ENCODE measurements at regions of chr2 and their contacts with region 1.

Region 1: DNA sequence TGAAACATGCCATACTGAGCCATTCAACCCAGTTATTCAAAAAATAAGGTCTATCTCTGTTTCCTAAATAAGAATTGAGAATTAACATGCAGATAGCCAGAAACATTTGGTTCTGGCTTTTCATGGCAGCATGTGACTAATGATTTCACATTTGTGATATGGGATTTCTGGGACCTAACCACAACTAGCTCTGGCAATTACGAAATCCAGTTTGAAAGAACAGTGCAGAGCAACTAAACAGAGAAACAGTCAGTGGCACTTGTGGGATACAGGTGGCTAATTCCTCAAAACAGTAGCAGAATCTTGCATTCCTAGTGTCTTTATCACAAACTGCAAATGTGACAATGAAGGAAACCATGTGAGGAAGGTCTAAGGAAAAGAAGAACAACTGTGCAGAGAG is 637.8 kb upstream of the CHAC2 start:
- DNase-seq: peak; percentile 76
- ATAC-seq: peak; percentile 43
- H3K4me3 ChIP-seq: peak overlapping the region; percentile 7; the same call in 1 of the 2 replicates
- H3K27ac ChIP-seq: peak overlapping the region; percentile 87
- H3K4me1 ChIP-seq: peaks cover 32% of the 10 kb centered on the region
- H3K27me3 ChIP-seq: no peaks in the 10 kb centered on the region
- CTCF ChIP-seq: no peak

Region 2: DNA sequence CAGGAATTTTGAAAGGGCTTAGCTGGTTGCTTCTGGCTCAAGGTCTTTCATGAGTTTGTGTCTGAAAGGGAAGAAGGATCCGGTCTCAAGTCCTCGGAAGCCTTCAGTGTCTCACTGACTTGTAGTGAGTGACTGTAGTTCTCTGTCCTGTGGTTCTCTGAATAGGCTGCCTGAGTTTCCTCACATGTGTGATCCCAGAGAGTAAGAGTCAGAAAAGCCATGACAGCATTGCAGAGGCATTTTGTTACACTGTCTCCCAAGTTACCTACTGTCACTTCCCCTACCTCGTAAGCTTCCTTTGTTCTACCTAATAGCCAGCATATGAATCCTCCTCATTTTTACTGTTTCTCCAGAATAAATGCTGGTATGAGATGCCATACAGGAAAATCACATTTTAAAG is 71.3 kb before region 1 on chr2:
- CTCF ChIA-PET with region 1: no interaction called
- POLR2A ChIA-PET with region 1: no interaction called
- intact Hi-C with region 1: loop called (anchors 2 kb)
- DNase-seq: peak; percentile 54
- ATAC-seq: peak; percentile 68
- H3K4me3 ChIP-seq: no peak overlapping the region
- H3K27ac ChIP-seq: no peak overlapping the region
- H3K4me1 ChIP-seq: 0 out of 2 replicates have a peak, but pooled peaks cover 1% of the 10 kb centered on the region
- H3K27me3 ChIP-seq: no peaks in the 10 kb centered on the region
- CTCF ChIP-seq: no peak

Region 3: GRCh38 chr2:53104263-53104662 is 25.6 kb before region 1 on chr2:
- CTCF ChIA-PET with region 1: no interaction called
- POLR2A ChIA-PET with region 1: no interaction called
- intact Hi-C with region 1: loop called (anchors 2 kb)
- DNase-seq: peak; percentile 95
- ATAC-seq: peak; percentile 95
- H3K4me3 ChIP-seq: no peak overlapping the region
- H3K27ac ChIP-seq: peak overlapping the region; percentile 71
- H3K4me1 ChIP-seq: peaks cover 21% of the 10 kb centered on the region
- H3K27me3 ChIP-seq: no peaks in the 10 kb centered on the region
- CTCF ChIP-seq: no peak

Region 4: GRCh38 chr2:53234548-53234903 is 104.7 kb after region 1 on chr2:
- CTCF ChIA-PET with region 1: no interaction called
- POLR2A ChIA-PET with region 1: no interaction called
- intact Hi-C with region 1: no loop called
- DNase-seq: peak; percentile 42
- ATAC-seq: 0 out of 2 replicates have a peak, but pooled peaks have one; percentile 21
- H3K4me3 ChIP-seq: no peak overlapping the region
- H3K27ac ChIP-seq: no peak overlapping the region
- H3K4me1 ChIP-seq: peaks cover 22% of the 10 kb centered on the region
- H3K27me3 ChIP-seq: no peaks in the 10 kb centered on the region
- CTCF ChIP-seq: no peak